ENCODE measurements at regions of chr19 and their contacts with region 1.

Region 1: DNA sequence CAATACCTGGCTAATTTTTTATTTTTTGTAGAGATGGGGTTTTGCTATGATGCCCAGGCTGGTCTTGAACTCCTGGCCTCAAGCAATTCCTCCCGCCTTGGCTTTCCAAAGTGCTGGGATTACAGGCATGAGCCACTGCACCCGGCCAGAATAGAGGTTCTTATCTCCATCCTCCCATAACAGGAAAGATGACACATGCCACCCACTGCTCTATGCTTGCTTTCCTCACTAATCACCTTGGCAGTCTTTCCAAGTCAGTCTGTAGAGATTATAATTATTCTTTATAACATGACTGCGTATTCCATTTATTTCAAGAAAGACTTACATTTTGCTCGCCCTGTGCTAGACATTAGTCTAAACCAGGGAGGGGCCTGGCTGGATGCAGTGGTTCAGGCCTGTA is 6.7 kb downstream of the VAV1 start:
- DNase-seq: no peak
- ATAC-seq: no peak
- H3K4me3 ChIP-seq: no peak overlapping the region
- H3K4me3 Mint-ChIP-seq: no peak overlapping the region
- H3K27ac ChIP-seq: peak overlapping the region in 1 of 2 donors; percentile 30
- H3K27ac Mint-ChIP-seq: peak overlapping the region; percentile 53
- H3K4me1 ChIP-seq: peaks cover 30 to 54% of the 10 kb centered on the region in 2 donors
- H3K4me1 Mint-ChIP-seq: peaks cover 54% of the 10 kb centered on the region
- H3K27me3 ChIP-seq: no peaks in the 10 kb centered on the region
- H3K27me3 Mint-ChIP-seq: no peaks in the 10 kb centered on the region
- CTCF ChIP-seq: no peak

Region 2: GRCh38 chr19:5536337-5536894 is 1242.8 kb before region 1 on chr19:
- CTCF ChIA-PET with region 1: no interaction called
- POLR2A ChIA-PET with region 1: no interaction called
- intact Hi-C with region 1: no loop called
- DNase-seq: no peak
- ATAC-seq: no peak
- H3K4me3 ChIP-seq: no peak overlapping the region
- H3K4me3 Mint-ChIP-seq: no peak overlapping the region
- H3K27ac ChIP-seq: no peak overlapping the region
- H3K27ac Mint-ChIP-seq: no peak overlapping the region
- H3K4me1 ChIP-seq: no peaks in the 10 kb centered on the region
- H3K4me1 Mint-ChIP-seq: no peaks in the 10 kb centered on the region
- H3K27me3 ChIP-seq: peaks cover 0 to 25% (median 2%) of the 10 kb centered on the region in 4 experiments
- H3K27me3 Mint-ChIP-seq: peaks cover 23% of the 10 kb centered on the region
- CTCF ChIP-seq: no peak

Region 3: GRCh38 chr19:6652805-6653094 is 126.5 kb before region 1 on chr19:
- CTCF ChIA-PET with region 1: no interaction called
- POLR2A ChIA-PET with region 1: interaction called, 11 read pairs
- intact Hi-C with region 1: no loop called
- DNase-seq: no peak
- ATAC-seq: no peak
- H3K4me3 ChIP-seq: no peak overlapping the region
- H3K4me3 Mint-ChIP-seq: no peak overlapping the region
- H3K27ac ChIP-seq: no peak overlapping the region
- H3K27ac Mint-ChIP-seq: no peak overlapping the region
- H3K4me1 ChIP-seq: peaks cover 5 to 6% of the 10 kb centered on the region in 2 donors
- H3K4me1 Mint-ChIP-seq: peaks cover 10% of the 10 kb centered on the region
- H3K27me3 ChIP-seq: no peaks in the 10 kb centered on the region
- H3K27me3 Mint-ChIP-seq: peaks cover 22% of the 10 kb centered on the region
- CTCF ChIP-seq: no peak

Region 4: DNA sequence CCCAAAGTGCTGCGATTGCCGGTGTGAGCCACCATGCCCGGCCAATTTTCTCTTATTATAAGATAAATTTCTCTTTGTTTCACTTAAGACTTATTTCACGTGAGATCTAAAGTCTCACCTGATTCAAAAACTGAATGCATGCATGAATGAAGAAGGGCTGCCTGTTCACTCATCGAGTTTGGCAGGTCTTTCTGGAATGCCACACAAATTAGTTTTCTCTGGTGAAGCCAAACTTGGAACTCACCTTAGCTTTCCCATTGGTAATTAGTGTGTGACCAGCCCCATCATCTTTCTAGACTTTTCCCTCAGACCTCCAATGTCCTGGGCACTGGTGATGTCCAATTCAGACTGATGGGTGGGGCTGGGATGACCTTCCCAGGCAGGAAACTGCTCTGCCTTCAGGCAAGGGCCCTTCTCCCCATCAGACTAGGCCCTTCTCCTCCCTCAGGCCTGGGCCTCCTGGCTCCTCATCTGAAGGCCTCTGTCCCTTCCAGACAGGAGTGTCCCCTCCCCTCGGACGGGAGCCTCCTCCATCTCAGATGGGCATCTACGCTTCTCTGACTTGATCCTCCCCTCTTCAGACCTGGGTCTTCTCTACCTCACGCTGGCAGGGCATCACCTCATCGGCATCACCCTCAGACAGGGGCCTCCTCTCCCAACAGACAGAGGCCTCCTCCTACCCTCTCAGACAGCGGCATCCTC is 73.1 kb before region 1 on chr19:
- CTCF ChIA-PET with region 1: no interaction called
- POLR2A ChIA-PET with region 1: no interaction called
- intact Hi-C with region 1: no loop called
- DNase-seq: no peak
- ATAC-seq: no peak
- H3K4me3 ChIP-seq: no peak overlapping the region
- H3K4me3 Mint-ChIP-seq: no peak overlapping the region
- H3K27ac ChIP-seq: no peak overlapping the region
- H3K27ac Mint-ChIP-seq: no peak overlapping the region
- H3K4me1 ChIP-seq: peaks cover 3 to 11% of the 10 kb centered on the region in 2 donors
- H3K4me1 Mint-ChIP-seq: peaks cover 9% of the 10 kb centered on the region
- H3K27me3 ChIP-seq: peaks cover 0 to 24% (median 4%) of the 10 kb centered on the region in 4 experiments
- H3K27me3 Mint-ChIP-seq: peaks cover 22% of the 10 kb centered on the region
- CTCF ChIP-seq: no peak